GM12878 (cell line): ENCODE measurements at regions of chr4 and their contacts with region 1.

Region 1: GRCh38 chr4:48079972-48080391 is 54.1 kb downstream of the TXK start:
- DNase-seq: no peak
- ATAC-seq: no peak
- H3K4me3 ChIP-seq: no peak overlapping the region
- H3K27ac ChIP-seq: no peak overlapping the region
- H3K4me1 ChIP-seq: no peaks in the 10 kb centered on the region
- H3K27me3 ChIP-seq: no peaks in the 10 kb centered on the region
- CTCF ChIP-seq: no peak
- EP300 ChIP-seq: no peak
- POLR2A ChIP-seq: no peak
- RAD21 ChIP-seq: no peak

Region 2: GRCh38 chr4:47686294-47686872 is 393.6 kb before region 1 on chr4:
- CTCF ChIA-PET with region 1: no interaction called
- POLR2A ChIA-PET with region 1: no interaction called
- RAD21 ChIA-PET with region 1: no interaction called
- SMC1A ChIA-PET with region 1: interaction called, 3 read pairs
- in situ Hi-C with region 1: loop called (anchors 10 kb)
- intact Hi-C with region 1: loop called (anchors 10 kb)
- DNase-seq: peak; percentile 13
- ATAC-seq: peak; percentile 92
- H3K4me3 ChIP-seq: no peak overlapping the region
- H3K27ac ChIP-seq: no peak overlapping the region
- H3K4me1 ChIP-seq: no peaks in the 10 kb centered on the region
- H3K27me3 ChIP-seq: no peaks in the 10 kb centered on the region
- CTCF ChIP-seq: peak; percentile 76 to 84 (median 79)
- EP300 ChIP-seq: no peak
- POLR2A ChIP-seq: no peak
- RAD21 ChIP-seq: peak; percentile 74

Region 3: DNA sequence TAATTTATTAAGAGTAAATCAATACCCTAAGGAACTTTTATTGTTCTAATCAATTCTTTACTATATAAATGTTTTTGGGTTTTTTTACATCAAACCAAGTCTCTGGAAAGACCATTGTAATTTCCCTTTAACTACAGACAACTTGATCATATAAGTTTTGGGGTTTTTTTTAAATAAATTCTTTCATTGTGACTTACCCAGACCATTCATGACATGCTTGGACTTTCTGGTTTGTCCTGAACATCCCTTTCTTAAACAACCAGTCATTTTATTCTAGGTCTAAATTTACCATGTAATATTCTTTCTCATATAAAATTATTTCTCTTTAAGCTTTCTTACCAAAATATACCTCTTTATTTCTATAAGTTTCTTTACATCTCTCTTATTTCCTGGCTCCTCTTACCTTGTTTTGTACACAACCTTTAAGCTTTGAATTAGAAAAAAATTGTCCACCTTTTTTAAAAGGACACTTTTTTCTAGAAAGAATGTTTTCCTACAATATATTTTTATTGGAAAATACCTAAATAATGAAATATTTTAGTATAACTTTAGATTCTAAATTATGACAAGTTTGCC is 71.9 kb before region 1 on chr4:
- CTCF ChIA-PET with region 1: interaction called, 129 read pairs
- POLR2A ChIA-PET with region 1: no interaction called
- RAD21 ChIA-PET with region 1: interaction called, 75 read pairs
- SMC1A ChIA-PET with region 1: interaction called, 74 read pairs
- in situ Hi-C with region 1: loop called (anchors 5 kb)
- intact Hi-C with region 1: no loop called
- DNase-seq: no peak
- ATAC-seq: no peak
- H3K4me3 ChIP-seq: no peak overlapping the region
- H3K27ac ChIP-seq: no peak overlapping the region
- H3K4me1 ChIP-seq: no peaks in the 10 kb centered on the region
- H3K27me3 ChIP-seq: no peaks in the 10 kb centered on the region
- CTCF ChIP-seq: no peak
- EP300 ChIP-seq: no peak
- POLR2A ChIP-seq: no peak
- RAD21 ChIP-seq: no peak